Activated CD8-positive, alpha-beta memory T cell treated with anti-CD3 and anti-CD28 coated beads, Interleukin-2, amount 10 ng/mL, durations not matched to agents 7 days and 5 days (primary cell): ENCODE measurements at regions of chr15 and their contacts with region 1.

Region 1: DNA sequence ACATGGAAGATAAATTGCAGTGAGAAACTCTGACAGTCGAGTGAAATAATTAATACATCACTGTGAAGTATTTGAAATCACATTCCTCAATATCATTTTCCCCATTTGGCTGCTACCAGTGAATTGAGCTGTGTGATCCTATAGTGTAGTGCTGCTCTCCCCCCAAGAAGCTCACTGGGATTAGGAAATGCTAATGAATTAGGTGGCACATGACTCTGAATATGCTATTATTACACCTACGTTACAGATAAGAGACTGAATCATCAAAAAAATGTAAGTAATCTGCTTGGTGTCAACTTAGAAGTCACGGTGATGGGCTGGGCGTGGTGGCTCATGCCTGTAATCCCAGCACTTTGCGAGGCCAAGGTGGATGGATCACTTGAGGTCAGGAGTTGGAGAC is 34.7 kb upstream of the SYNM start:
- DNase-seq: no peak
- ATAC-seq: no peak
- H3K4me3 Mint-ChIP-seq: no peak overlapping the region
- H3K27ac Mint-ChIP-seq: no peak overlapping the region
- H3K4me1 Mint-ChIP-seq: no peaks in the 10 kb centered on the region
- H3K27me3 Mint-ChIP-seq: peaks cover 5% of the 10 kb centered on the region

Region 2: DNA sequence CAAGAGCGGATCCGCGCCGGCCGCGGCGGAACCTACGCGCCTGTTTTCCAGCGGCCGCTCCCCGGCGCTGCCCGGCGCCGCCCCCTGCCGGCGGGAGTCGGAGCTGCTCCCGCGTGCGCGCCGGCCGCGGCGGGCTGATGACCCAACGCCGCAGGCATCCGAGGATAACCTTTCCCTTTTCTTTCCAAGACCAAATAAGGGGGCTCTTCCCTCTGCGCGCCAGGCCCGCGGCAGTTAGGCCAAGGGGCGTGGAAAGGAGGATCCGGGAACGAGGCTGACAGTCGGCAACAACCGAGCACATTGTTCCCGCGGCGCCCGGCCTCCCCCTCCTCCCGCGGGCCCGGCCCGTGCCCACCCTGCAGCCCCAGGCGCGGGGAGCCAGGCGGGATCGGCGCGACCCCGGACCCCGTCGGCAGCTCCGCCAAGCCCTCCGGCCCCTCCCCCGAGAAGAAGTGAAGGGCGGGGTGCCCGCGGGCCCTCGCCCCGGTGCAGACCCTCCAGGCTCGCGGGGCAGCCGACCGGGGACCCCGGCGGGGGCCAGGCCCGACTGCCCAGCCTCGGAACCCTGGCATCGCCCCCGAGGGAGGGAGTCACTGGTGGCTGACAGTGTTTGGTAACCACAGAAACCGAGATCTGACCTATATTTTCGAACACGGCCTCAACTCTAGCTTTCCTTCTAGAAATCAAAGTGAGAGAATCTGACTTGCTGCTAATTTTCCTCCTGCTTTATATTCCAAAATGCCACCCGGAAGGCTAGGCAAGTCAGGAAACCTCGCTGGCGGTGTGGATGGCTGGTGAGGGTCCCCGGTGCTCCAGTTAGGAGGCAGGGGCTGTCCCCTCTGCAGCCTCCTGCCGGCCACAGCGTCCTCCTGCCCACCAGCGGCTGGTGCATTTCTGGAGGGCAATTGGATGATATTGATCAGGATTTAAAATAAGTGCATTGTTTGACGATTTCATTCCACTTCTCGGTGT is 10.9 kb before region 1 on chr15:
- CTCF ChIA-PET with region 1: interaction called, 18 read pairs
- DNase-seq: no peak
- ATAC-seq: peak; percentile 88
- H3K4me3 Mint-ChIP-seq: peak overlapping the region; percentile 39
- H3K27ac Mint-ChIP-seq: no peak overlapping the region
- H3K4me1 Mint-ChIP-seq: peaks cover 5% of the 10 kb centered on the region
- H3K27me3 Mint-ChIP-seq: peaks cover 45% of the 10 kb centered on the region